Upper lobe of right lung (tissue), 1 donor: ENCODE measurements at regions of chr20 and their contacts with region 1.

Region 1: DNA sequence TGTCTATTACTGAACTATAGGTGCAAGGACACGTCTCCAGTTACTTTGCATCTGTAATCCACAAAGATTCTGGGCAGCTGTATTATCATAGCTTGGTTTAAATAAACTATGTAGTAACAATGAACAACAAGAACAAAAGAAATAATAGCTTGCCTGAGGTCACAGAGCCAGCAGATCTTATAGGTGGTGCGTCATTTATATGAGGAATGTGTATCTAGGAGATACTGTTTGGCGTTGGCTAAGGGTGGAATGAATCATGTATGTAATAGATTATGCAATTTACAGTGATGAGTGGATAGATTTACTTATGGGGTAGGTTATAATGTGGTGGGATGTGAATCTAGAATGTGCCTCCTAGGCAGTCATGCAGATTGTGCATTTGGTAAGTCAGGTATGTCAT is 42.8 kb downstream of the HNF4A start:
- DNase-seq: no peak
- ATAC-seq: no peak
- H3K4me3 ChIP-seq: no peak overlapping the region
- H3K27ac ChIP-seq: no peak overlapping the region
- H3K4me1 ChIP-seq: peaks cover 4% of the 10 kb centered on the region
- H3K27me3 ChIP-seq: no peaks in the 10 kb centered on the region
- CTCF ChIP-seq: no peak

Region 2: GRCh38 chr20:44460795-44461141 is 62.5 kb after region 1 on chr20:
- intact Hi-C with region 1: loop called (anchors 10 kb)
- DNase-seq: no peak
- ATAC-seq: peak; percentile 40
- H3K4me3 ChIP-seq: no peak overlapping the region
- H3K27ac ChIP-seq: no peak overlapping the region
- H3K4me1 ChIP-seq: no peaks in the 10 kb centered on the region
- H3K27me3 ChIP-seq: no peaks in the 10 kb centered on the region
- CTCF ChIP-seq: peak; percentile 47

Region 3: GRCh38 chr20:44576297-44576696 is 178.0 kb after region 1 on chr20:
- intact Hi-C with region 1: no loop called
- DNase-seq: no peak
- ATAC-seq: peak; percentile 86
- H3K4me3 ChIP-seq: no peak overlapping the region
- H3K27ac ChIP-seq: peak overlapping the region; percentile 7
- H3K4me1 ChIP-seq: peaks cover 65% of the 10 kb centered on the region
- H3K27me3 ChIP-seq: no peaks in the 10 kb centered on the region
- CTCF ChIP-seq: peak; percentile 35